Activated T-helper 2 cell treated with anti-CD3 and anti-CD28 coated beads, Interferon-gamma antibody, Interleukin-2, Interleukin-4, amounts not matched to agents 10 μg/mL and 5 μg/mL and 100 μg/mL, durations not matched to agents 14 hours and 24 hours and 36 hours (primary cell): ENCODE measurements at regions of chr20 and their contacts with region 1.

Region 1: GRCh38 chr20:43955062-43955749 is 40.6 kb downstream of the TOX2 start:
- DNase-seq: peak; percentile 40
- H3K4me3 Mint-ChIP-seq: peak overlapping the region; percentile 24
- H3K27ac Mint-ChIP-seq: peak overlapping the region; percentile 77
- H3K4me1 Mint-ChIP-seq: peaks cover 65% of the 10 kb centered on the region
- H3K27me3 Mint-ChIP-seq: peaks cover 26% of the 10 kb centered on the region

Region 2: DNA sequence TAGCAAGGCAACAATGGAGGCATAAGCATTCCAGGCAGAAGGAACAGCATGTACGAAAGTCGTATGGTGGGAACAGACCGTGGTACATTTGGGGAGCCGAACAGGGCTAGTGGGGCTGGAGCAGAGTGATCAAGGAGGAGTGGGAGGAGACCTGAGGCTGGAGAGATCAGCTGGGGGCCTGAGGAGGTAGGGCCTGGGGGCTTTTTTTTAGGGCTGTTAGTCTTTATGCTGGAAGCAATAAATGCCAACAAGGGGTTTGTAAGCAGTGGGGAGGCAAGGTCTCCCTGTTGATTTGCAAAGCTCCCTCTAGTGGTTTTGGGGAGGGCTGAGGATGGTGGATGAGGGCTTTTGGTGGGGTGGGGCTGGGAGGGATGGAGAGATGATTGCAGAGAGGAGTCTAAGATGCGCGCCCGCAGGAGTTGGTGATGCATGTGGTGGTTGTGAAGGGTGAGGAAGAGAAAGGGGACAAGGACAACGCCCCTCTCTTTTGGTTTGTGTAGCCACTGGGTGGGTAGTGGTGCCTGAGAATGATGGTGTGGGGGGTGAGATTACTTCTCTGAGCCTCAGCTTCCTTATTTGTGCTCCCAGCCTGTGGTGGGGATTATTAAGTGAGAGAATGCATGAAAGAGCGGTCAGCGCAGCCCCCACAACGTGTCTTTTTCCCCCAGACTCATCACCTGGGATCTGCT is 114.7 kb before region 1 on chr20:
- intact Hi-C with region 1: loop called (anchors 2 kb)
- DNase-seq: peak; percentile 26
- H3K4me3 Mint-ChIP-seq: no peak overlapping the region
- H3K27ac Mint-ChIP-seq: peak overlapping the region; percentile 56
- H3K4me1 Mint-ChIP-seq: peaks cover 60% of the 10 kb centered on the region
- H3K27me3 Mint-ChIP-seq: peaks cover 2% of the 10 kb centered on the region

Region 3: DNA sequence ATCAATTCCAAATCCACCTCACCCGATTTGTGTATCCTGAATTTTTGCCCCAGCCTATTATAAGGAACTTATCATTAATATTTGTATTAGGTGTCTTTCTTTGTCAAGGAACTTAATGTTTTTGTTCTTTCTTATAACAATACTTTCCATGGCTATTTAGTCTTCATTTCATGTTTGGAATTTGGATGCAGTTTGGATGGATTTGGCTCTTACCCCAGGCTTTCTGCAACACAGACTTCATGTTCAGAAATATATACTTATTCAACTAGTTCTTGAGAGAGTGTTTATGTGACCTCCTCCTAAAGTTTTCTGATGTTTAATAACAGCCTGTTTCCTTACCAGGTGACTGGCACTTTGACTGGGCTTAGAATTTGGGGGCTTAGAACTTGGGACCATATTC is 76.4 kb before region 1 on chr20:
- intact Hi-C with region 1: no loop called
- DNase-seq: no peak
- H3K4me3 Mint-ChIP-seq: no peak overlapping the region
- H3K27ac Mint-ChIP-seq: no peak overlapping the region
- H3K4me1 Mint-ChIP-seq: no peaks in the 10 kb centered on the region
- H3K27me3 Mint-ChIP-seq: peaks cover 45% of the 10 kb centered on the region

Region 4: DNA sequence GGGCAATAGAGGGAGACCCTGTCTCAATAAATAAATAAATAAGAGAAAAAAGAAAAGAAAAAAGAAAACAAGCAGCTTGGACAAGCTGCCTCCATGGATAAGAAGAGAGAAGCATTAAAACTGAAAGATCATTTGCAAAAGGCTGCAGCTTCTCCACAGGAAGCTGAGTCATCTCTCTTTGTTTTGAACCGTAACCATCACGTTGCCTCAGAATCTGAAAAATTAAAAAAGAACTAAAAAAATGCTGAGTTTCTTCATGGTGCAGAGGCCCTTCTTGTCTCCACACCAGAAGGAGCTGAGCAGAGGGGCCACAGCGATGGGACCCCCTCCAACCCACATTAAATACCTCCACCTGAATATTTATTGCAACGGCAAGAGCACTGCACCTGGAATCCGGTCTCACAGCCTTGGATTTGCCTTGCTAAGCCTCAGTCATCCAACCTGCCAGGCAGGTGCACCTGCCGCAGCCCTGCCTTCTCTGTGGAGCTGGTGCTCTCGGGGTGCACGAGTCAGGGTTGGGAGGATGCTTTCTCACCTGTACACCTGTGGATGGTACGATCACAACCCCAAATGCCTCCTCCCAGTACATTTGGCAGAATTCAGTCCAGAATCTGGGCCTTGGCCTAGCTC is 12.4 kb before region 1 on chr20:
- intact Hi-C with region 1: loop called (anchors 1 kb)
- DNase-seq: peak; percentile 26
- H3K4me3 Mint-ChIP-seq: peak overlapping the region; percentile 43
- H3K27ac Mint-ChIP-seq: peak overlapping the region; percentile 73
- H3K4me1 Mint-ChIP-seq: peaks cover 69% of the 10 kb centered on the region
- H3K27me3 Mint-ChIP-seq: peaks cover 21% of the 10 kb centered on the region

Region 5: DNA sequence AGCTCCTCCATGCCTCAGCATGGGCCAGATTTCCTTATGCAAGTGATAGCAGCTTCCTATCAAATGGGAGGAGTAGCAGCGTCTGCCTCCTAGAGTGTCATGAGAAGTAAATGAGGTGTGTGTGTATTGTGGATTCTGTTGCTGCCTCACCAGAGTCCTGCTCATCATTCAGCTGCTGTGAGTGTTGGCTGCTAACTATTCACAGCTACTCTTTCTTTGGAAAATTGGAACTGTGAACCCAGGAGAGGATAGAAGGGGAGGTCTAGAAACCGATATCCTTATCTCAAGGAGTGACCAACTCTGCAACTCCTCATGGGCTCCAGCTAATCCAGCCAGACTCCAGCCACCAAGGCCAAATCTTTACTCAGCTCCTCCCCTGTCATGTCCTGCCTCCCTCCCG is 22.8 kb after region 1 on chr20:
- intact Hi-C with region 1: loop called (anchors 2 kb)
- DNase-seq: no peak
- H3K4me3 Mint-ChIP-seq: no peak overlapping the region
- H3K27ac Mint-ChIP-seq: no peak overlapping the region
- H3K4me1 Mint-ChIP-seq: peaks cover 22% of the 10 kb centered on the region
- H3K27me3 Mint-ChIP-seq: peaks cover 20% of the 10 kb centered on the region

Region 6: DNA sequence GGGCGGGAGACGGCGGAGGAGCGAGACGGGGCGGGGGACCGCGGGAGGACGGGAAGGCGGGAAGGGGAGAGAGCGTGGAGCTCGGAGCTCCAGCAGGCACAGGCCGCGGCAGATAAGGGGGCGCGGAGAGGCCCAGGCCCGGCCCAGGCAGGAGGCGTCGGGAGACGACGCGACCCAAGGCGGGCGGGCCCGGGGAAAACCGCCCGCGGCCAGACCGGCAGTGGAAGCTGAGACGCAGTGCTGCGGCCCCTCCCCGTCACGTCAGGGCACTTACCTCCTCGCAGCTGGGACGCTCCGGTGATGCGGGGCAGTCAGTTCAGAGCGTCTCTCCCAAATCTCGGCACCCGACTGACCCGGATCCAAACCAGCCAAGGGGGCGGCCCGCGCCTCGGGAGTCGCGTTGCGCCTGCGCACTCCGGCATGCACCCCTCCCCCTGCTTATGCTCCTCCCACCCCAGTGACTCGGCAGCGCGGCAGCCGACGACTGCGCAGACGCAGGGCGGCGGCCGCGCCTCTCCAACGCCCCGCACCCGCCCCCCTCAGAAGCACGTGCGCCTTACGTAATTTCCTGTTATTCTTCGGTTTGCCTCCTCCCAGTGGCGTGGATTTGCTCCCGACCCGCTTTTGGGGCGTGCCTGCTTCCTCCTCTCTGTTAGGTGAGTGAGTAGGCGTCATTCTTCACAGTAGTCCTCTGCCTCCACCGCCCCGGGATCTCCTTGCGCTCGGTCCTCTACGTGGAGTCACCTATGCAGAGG is 255.4 kb after region 1 on chr20 and contains the start of gene OSER1:
- intact Hi-C with region 1: loop called (anchors 10 kb)
- DNase-seq: peak; percentile 97
- H3K4me3 Mint-ChIP-seq: peak within 1 kb of the TSS; percentile 97
- H3K27ac Mint-ChIP-seq: peak within 1 kb of the TSS; percentile 90
- H3K4me1 Mint-ChIP-seq: peaks cover 53% of the 10 kb centered on the region
- H3K27me3 Mint-ChIP-seq: no peaks in the 10 kb centered on the region
- total RNA-seq, gene OSER1: 21.4 and 22.4 TPM in 2 replicates